ENCODE measurements at regions of chr7 and their contacts with region 1.

Region 1: GRCh38 chr7:69651101-69651590 is 52.9 kb downstream of the AUTS2 start:
- DNase-seq: no peak
- ATAC-seq: no peak
- H3K4me3 ChIP-seq: no peak overlapping the region
- H3K27ac ChIP-seq: no peak overlapping the region
- H3K4me1 ChIP-seq: no peaks in the 10 kb centered on the region
- H3K27me3 ChIP-seq: 0 out of 5 replicates have a peak, but pooled peaks cover 0 to 1% of the 10 kb centered on the region in 2 experiments
- CTCF ChIP-seq: no peak
- EP300 ChIP-seq: no peak
- POLR2A ChIP-seq: no peak
- RAD21 ChIP-seq: no peak

Region 2: DNA sequence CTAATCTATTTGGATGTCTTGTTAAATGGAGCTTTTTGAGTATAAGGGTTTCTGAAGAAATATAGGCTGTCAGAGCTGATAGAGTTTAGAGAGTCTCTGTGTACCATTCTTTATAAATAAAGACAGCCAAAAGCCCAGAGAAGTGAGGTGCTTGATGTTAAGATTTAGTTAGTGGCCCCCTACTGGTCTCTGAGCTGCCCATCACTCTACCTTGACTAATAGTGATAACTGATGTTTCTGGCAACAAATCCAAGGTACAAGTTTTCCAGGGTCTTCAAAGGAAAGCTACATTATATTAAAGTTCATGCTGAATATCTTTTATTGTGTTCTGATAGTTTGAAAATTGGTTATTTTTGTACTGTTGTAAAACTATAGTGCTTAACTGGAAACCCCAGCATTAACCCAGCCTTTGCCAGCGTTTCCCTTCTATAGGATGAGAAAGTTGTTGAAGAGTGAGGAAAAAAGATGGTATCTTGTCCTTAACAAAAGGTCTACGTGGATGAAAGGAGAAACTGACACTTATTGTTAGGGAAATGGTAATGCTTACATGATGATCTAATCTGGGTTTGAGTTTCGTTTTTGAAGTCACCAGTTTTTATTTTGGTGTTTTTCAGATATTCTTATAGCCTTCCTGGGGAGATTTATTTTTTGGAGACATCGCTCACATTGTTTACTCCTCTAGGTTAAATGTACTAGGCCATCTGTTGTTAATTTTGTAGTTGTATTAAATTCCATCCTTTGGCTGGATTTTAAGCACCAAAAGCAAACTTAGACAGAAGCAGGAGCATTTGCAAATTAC is 26.1 kb after region 1 on chr7:
- CTCF ChIA-PET with region 1: no interaction called
- POLR2A ChIA-PET with region 1: no interaction called
- in situ Hi-C with region 1: no loop called
- intact Hi-C with region 1: no loop called
- DNase-seq: no peak
- ATAC-seq: no peak
- H3K4me3 ChIP-seq: no peak overlapping the region
- H3K27ac ChIP-seq: no peak overlapping the region
- H3K4me1 ChIP-seq: no peaks in the 10 kb centered on the region
- H3K27me3 ChIP-seq: no peaks in the 10 kb centered on the region
- CTCF ChIP-seq: no peak
- EP300 ChIP-seq: no peak
- POLR2A ChIP-seq: no peak
- RAD21 ChIP-seq: no peak

Region 3: DNA sequence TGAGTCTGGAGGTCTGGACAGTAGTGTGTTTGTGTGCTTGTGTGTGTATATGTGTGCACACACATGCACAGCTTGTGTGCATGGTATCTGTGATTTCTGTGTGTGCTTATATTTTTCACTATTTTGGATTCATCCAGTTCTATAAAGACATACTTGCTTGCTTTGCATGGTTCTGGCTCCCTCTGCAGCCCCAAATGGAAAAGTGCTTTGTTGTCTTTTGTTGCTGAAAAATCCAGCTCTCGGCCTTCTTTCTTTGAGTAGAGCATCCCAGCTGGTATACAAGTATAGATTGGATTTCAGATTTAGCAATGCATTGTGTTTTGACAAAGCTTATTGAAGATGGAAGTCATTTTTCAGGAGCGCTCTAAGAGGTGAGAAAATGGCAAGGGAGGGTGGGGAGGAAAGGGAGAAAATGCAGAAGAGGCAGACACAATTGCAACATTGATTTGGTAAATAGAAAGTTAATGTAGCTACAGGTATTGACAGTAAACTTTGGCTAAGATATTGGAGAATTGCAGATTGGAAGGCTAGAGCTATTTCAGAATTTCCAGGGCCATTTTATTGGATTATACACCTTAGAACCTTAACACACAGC is 281.0 kb after region 1 on chr7:
- CTCF ChIA-PET with region 1: no interaction called
- POLR2A ChIA-PET with region 1: no interaction called
- in situ Hi-C with region 1: no loop called
- intact Hi-C with region 1: no loop called
- DNase-seq: no peak
- ATAC-seq: no peak
- H3K4me3 ChIP-seq: no peak overlapping the region
- H3K27ac ChIP-seq: no peak overlapping the region
- H3K4me1 ChIP-seq: no peaks in the 10 kb centered on the region
- H3K27me3 ChIP-seq: no peaks in the 10 kb centered on the region
- CTCF ChIP-seq: peak; percentile 35; the same call in 1 of the 2 replicates
- EP300 ChIP-seq: no peak
- POLR2A ChIP-seq: no peak
- RAD21 ChIP-seq: no peak

Region 4: GRCh38 chr7:70710011-70710480 is 1058.9 kb after region 1 on chr7:
- CTCF ChIA-PET with region 1: no interaction called
- POLR2A ChIA-PET with region 1: no interaction called
- in situ Hi-C with region 1: no loop called
- intact Hi-C with region 1: loop called (anchors 10 kb)
- DNase-seq: no peak
- ATAC-seq: no peak
- H3K4me3 ChIP-seq: no peak overlapping the region
- H3K27ac ChIP-seq: no peak overlapping the region
- H3K4me1 ChIP-seq: no peaks in the 10 kb centered on the region
- H3K27me3 ChIP-seq: no peaks in the 10 kb centered on the region
- CTCF ChIP-seq: no peak
- EP300 ChIP-seq: no peak
- POLR2A ChIP-seq: no peak
- RAD21 ChIP-seq: no peak

Measured in HepG2 (cell line).